GM23248 (cell line): ENCODE measurements at regions of chr7 and their contacts with region 1.

Region 1: GRCh38 chr7:143214789-143215679 is 6.8 kb upstream of the TAS2R40 start:
- DNase-seq: peak; percentile 87
- H3K4me3 ChIP-seq: no peak overlapping the region
- H3K27ac ChIP-seq: no peak overlapping the region
- H3K4me1 ChIP-seq: peaks cover 7% of the 10 kb centered on the region; the same call in 1 of the 2 replicates
- H3K27me3 ChIP-seq: peaks cover 5% of the 10 kb centered on the region

Region 2: DNA sequence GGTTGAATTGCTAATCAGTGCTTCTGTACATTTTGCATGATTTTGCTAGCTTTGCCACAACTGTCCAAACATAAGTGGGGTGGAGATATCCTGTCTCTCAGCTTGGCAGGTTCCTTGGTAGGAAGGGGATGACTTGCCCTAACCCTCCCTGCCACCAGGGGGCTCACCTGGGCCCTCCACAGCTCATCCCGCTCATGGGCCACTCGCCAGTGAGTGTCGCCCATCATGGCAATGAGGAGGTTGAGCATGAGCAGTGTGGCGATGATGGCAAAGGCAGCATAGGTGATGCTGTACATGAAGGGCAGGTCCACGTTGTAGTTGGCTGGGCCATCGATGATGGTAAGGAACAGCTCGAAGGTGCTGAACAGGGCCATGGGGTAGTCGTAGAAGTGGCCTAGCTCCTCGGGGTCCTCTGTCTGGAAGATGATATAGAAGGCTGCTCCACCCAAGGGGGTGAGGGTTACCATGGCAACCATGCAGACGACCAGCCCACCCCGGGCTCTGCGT is 341.7 kb before region 1 on chr7:
- in situ Hi-C with region 1: loop called (anchors 10 kb)
- DNase-seq: no peak
- H3K4me3 ChIP-seq: no peak overlapping the region
- H3K27ac ChIP-seq: no peak overlapping the region
- H3K4me1 ChIP-seq: no peaks in the 10 kb centered on the region
- H3K27me3 ChIP-seq: peaks cover 9% of the 10 kb centered on the region

Region 3: DNA sequence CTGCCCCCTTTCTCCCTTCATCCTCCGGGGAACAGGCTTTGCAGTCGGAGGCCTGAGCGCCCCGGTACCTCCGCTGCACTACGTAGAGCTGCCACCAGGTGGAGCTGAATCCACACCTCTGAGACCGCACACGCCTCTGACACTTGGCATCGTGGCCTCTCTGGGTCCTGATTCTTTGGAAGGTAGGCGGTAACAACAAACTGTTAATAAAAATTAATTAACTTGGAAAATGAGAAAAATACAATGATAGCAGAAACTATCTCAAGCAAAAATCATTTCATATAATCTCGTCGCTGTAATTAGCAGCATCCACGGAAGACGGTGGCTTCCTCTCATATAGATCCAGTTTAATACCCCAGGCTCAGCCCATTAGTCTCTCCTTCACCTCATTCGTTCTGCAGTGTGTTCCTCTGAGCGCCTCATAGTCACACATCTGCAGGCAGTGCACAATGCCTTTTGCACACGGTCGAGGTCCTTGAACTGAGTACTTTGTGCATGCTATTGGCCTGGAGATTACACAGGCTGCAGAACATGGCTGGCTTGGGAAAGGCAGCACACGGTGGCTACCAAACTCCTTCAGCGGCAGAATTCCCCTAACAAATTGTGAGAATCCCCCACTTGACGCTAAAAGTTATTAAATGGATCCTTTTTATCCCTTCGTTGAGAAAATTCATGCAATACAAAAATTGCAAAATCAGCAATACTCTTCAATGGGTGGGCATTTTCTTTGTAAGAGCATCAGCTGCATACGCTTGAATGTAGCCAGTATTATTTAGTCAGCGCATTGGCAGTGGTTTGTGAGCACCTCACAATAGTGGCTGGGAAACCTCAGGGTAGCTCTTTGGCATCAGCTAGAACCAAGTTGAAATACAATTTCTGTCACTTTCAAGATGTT is 206.8 kb before region 1 on chr7:
- in situ Hi-C with region 1: loop called (anchors 5 kb)
- DNase-seq: peak; percentile 76
- H3K4me3 ChIP-seq: no peak overlapping the region
- H3K27ac ChIP-seq: no peak overlapping the region
- H3K4me1 ChIP-seq: peaks cover 2% of the 10 kb centered on the region
- H3K27me3 ChIP-seq: 0 out of 2 replicates have a peak, but pooled peaks cover 16% of the 10 kb centered on the region

Region 4: GRCh38 chr7:143385891-143386781 is 171.1 kb after region 1 on chr7:
- in situ Hi-C with region 1: no loop called
- DNase-seq: peak; percentile 19
- H3K4me3 ChIP-seq: peak overlapping the region; percentile 20; the same call in 1 of the 2 replicates
- H3K27ac ChIP-seq: peak overlapping the region; percentile 19; the same call in 1 of the 2 replicates
- H3K4me1 ChIP-seq: peaks cover 40% of the 10 kb centered on the region
- H3K27me3 ChIP-seq: no peaks in the 10 kb centered on the region